CD8-positive, alpha-beta T cell (primary cell): ENCODE measurements at regions of chr3 and their contacts with region 1.

Region 1: DNA sequence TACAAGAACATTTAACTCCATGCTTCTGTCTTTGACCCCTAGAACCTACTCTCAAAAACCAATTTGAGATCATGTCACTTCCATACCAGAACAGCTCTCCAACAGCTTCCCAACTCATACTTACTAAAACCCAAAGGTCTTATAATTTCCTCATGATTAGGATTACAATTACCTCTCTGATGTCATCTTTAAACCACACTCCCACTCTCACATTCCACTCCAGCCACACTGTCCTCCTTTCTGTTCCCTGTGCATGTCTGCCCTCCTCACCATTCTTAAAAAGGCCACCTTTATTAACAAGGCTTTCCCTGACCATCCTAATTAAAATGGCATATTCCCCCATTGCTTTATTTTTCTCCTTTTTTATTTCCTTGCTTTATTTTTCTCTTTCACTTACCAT is 18.9 kb downstream of the PHC3 start:
- DNase-seq: no peak
- ATAC-seq: no peak
- H3K4me3 ChIP-seq: no peak overlapping the region
- H3K4me3 Mint-ChIP-seq: no peak overlapping the region
- H3K27ac ChIP-seq: no peak overlapping the region
- H3K27ac Mint-ChIP-seq: peak overlapping the region; percentile 39
- H3K4me1 ChIP-seq: peaks cover 37% of the 10 kb centered on the region
- H3K4me1 Mint-ChIP-seq: peaks cover 64% of the 10 kb centered on the region
- H3K27me3 ChIP-seq: no peaks in the 10 kb centered on the region
- H3K27me3 Mint-ChIP-seq: no peaks in the 10 kb centered on the region
- CTCF ChIP-seq: no peak

Region 2: DNA sequence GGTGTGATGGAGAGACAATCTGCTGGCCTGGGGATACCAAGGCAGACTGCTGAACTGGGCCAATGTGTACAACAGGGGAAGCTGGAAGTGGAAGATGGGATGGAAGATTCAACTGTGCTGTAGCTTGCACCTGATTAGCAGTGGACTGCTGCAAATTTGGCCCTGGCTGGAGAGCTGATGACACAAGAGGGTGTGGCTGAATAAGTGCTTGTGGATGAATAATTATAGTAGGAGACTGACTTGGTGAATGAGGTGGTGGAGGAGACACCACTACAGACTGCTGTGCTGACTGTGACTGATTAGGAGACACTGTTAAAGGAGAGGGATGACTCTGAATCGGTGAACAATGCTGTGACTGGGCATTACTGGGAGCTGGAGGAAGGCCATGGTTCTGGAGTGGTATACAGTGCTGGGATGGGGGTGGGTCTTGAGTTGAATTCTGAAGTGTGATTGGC is 33.6 kb before region 1 on chr3:
- CTCF ChIA-PET with region 1: no interaction called
- POLR2A ChIA-PET with region 1: no interaction called
- intact Hi-C with region 1: loop called in 1 of 2 experiments (anchors 5 kb)
- DNase-seq: no peak
- ATAC-seq: peak; percentile 34
- H3K4me3 ChIP-seq: no peak overlapping the region
- H3K4me3 Mint-ChIP-seq: peak overlapping the region; percentile 55
- H3K27ac ChIP-seq: peak overlapping the region in 1 of 2 experiments; percentile 8
- H3K27ac Mint-ChIP-seq: peak overlapping the region; percentile 81
- H3K4me1 ChIP-seq: peaks cover 17% of the 10 kb centered on the region
- H3K4me1 Mint-ChIP-seq: peaks cover 31% of the 10 kb centered on the region
- H3K27me3 ChIP-seq: no peaks in the 10 kb centered on the region
- H3K27me3 Mint-ChIP-seq: no peaks in the 10 kb centered on the region
- CTCF ChIP-seq: no peak